ENCODE measurements at regions of chr5 and their contacts with region 1.

Region 1: GRCh38 chr5:65468633-65469032 is 13.1 kb downstream of the ADAMTS6 start:
- DNase-seq: no peak
- H3K4me3 ChIP-seq: no peak overlapping the region
- CTCF ChIP-seq: no peak
- POLR2A ChIP-seq: no peak

Region 2: DNA sequence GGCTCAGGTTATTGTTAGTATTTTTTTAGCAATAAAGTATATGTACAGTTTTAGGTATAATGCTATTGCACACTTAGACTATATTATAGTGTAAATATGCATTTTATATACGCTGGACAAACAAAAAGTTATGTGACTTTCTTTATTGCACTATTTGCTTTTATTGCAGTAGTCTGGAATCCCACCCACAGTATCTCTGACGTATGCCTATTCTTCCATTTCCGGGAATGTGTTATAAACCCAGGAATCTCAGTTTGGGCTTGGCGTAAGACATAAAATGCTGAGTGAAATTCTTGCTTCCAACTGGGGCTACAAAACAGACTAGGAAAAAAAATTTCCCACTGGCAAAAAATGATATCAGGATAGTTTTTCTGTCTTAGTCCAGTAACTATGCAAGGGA is 1625.4 kb before region 1 on chr5:
- intact Hi-C with region 1: loop called (anchors 10 kb)
- DNase-seq: no peak
- H3K4me3 ChIP-seq: no peak overlapping the region
- CTCF ChIP-seq: no peak
- POLR2A ChIP-seq: no peak

Region 3: GRCh38 chr5:65555287-65555686 is 86.7 kb after region 1 on chr5:
- intact Hi-C with region 1: no loop called
- DNase-seq: no peak
- H3K4me3 ChIP-seq: no peak overlapping the region
- CTCF ChIP-seq: no peak
- POLR2A ChIP-seq: no peak

Measured in lower leg skin (tissue), 4 donors.